Naive thymus-derived CD4-positive, alpha-beta T cell (primary cell): ENCODE measurements at regions of chr10 and their contacts with region 1.

Region 1: GRCh38 chr10:133329491-133330202 is 7.0 kb downstream of the CALY start:
- DNase-seq: peak; percentile 72 to 88 (median 82)
- ATAC-seq: peak; percentile 92
- H3K4me3 ChIP-seq: no peak overlapping the region
- H3K4me3 Mint-ChIP-seq: peak overlapping the region in 8 of 10 donors; percentile 10 to 58 (median 42)
- H3K27ac ChIP-seq: no peak overlapping the region
- H3K27ac Mint-ChIP-seq: no peak overlapping the region
- H3K4me1 ChIP-seq: peaks cover 8 to 18% of the 10 kb centered on the region in 2 donors
- H3K4me1 Mint-ChIP-seq: peaks cover 4 to 18% (median 12%) of the 10 kb centered on the region in 7 donors
- H3K27me3 ChIP-seq: peaks cover 8 to 12% of the 10 kb centered on the region in 2 donors
- H3K27me3 Mint-ChIP-seq: peaks cover 12 to 78% (median 19%) of the 10 kb centered on the region in 5 donors

Region 2: DNA sequence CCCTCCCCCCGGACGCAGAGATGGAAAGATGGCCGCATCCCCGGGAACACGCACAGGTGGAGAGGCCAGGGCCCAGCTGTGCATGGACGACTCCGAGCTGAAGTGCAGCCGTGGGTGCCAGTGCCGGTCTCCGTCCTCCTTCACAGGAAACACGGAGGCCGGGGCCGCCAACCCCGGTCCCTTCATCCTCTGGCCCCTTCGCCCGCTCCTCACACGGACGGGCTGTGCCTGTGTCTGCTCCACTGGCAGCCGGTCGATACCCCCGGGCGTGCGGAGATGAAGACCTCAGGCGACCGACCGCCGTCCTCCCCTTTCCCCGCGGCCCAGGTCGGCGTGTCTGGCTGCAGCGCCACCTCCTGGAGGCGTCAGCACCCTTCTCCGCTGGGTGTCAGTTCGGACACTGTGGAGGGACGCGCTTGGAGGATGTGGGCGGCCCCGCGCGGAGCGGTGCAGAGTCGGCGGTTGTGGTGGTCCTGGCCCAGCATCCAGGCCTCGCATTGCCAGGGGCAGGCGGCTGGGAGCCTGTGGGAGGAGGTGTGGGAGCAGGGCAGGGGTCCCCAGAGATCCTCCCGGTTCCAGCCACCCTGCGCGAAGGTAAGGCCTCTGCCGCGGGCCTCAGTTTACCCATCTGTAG is 11.0 kb before region 1 on chr10:
- CTCF ChIA-PET with region 1: interaction called, 10 read pairs
- POLR2A ChIA-PET with region 1: interaction called, 10 read pairs
- intact Hi-C with region 1: no loop called
- DNase-seq: peak in 8 of 9 donors; percentile 38 to 78 (median 52)
- ATAC-seq: peak; percentile 96
- H3K4me3 ChIP-seq: peak overlapping the region; percentile 41
- H3K4me3 Mint-ChIP-seq: peak overlapping the region; percentile 34 to 77 (median 70)
- H3K27ac ChIP-seq: no peak overlapping the region
- H3K27ac Mint-ChIP-seq: peak overlapping the region in 1 of 9 donors; percentile 49
- H3K4me1 ChIP-seq: no peaks in the 10 kb centered on the region
- H3K4me1 Mint-ChIP-seq: peaks cover 0 to 13% (median 11%) of the 10 kb centered on the region in 7 donors
- H3K27me3 ChIP-seq: no peaks in the 10 kb centered on the region
- H3K27me3 Mint-ChIP-seq: peaks cover 0 to 15% (median 6%) of the 10 kb centered on the region in 5 donors

Region 3: GRCh38 chr10:133378251-133379096 is 48.8 kb after region 1 on chr10:
- CTCF ChIA-PET with region 1: interaction called, 4 read pairs
- POLR2A ChIA-PET with region 1: no interaction called
- intact Hi-C with region 1: loop called in 1 of 2 experiments (anchors 2 kb)
- DNase-seq: peak in 8 of 9 donors; percentile 51 to 78 (median 59)
- ATAC-seq: peak; percentile 73
- H3K4me3 ChIP-seq: peak overlapping the region; percentile 92
- H3K4me3 Mint-ChIP-seq: peak overlapping the region; percentile 82 to 90 (median 86)
- H3K27ac ChIP-seq: peak overlapping the region; percentile 69
- H3K27ac Mint-ChIP-seq: peak overlapping the region in 5 of 9 donors; percentile 33 to 84 (median 75)
- H3K4me1 ChIP-seq: peaks cover 0 to 3% of the 10 kb centered on the region in 2 donors
- H3K4me1 Mint-ChIP-seq: peaks cover 0 to 18% (median 10%) of the 10 kb centered on the region in 7 donors
- H3K27me3 ChIP-seq: no peaks in the 10 kb centered on the region
- H3K27me3 Mint-ChIP-seq: peaks cover 0 to 14% (median 0%) of the 10 kb centered on the region in 5 donors

Region 4: DNA sequence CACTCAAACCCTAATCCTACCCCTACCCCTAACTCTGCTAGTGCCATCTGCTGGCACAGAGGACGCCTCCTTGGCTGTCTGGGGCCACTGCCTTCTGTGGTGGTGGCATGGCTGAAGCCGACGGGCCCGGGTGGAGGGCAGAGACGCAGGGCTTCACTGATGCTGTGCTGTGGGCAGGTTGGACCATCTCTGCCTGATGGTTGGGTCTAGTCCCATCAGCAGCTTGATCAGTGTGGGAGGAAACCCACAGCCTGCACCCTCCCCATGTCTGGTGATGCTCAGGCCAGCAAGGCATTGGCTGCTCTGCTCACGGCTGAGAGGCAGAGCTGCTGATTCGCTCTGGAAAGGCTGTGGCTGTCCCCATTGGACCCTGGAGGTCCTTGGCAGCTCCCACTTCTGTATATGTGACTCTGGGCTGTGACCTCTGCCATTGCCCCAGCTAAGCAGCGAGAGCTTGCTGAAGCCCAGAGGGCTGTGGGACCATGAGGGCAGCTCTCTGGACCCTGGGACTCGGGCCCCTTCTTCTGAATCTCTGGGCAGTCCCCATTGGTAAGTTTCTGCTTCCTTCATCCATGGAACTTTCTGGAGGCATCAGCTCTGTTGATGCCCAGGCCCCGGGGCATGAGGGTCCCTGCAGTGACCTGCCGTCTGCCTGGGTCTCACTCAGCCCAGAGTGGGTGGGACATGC is 124.0 kb after region 1 on chr10 and contains the start of gene SCART1:
- CTCF ChIA-PET with region 1: no interaction called
- POLR2A ChIA-PET with region 1: no interaction called
- intact Hi-C with region 1: loop called in 1 of 2 experiments (anchors 5 kb)
- DNase-seq: no peak
- ATAC-seq: peak; percentile 55
- H3K4me3 ChIP-seq: no peak within 1 kb of the TSS
- H3K4me3 Mint-ChIP-seq: no peak within 1 kb of the TSS
- H3K27ac ChIP-seq: no peak within 1 kb of the TSS
- H3K27ac Mint-ChIP-seq: no peak within 1 kb of the TSS
- H3K4me1 ChIP-seq: no peaks in the 10 kb centered on the region
- H3K4me1 Mint-ChIP-seq: peaks cover 0 to 4% (median 0%) of the 10 kb centered on the region in 7 donors
- H3K27me3 ChIP-seq: no peaks in the 10 kb centered on the region
- H3K27me3 Mint-ChIP-seq: no peaks in the 10 kb centered on the region
- total RNA-seq, gene SCART1: 2.3 to 8.6 (median 4.5) TPM

Region 5: GRCh38 chr10:133608855-133609254 is 279.2 kb after region 1 on chr10:
- CTCF ChIA-PET with region 1: interaction called, 7 read pairs
- POLR2A ChIA-PET with region 1: no interaction called
- intact Hi-C with region 1: loop called (anchors 1 to 5 kb)
- DNase-seq: peak in 5 of 9 donors; percentile 7 to 23 (median 17)
- ATAC-seq: no peak
- H3K4me3 ChIP-seq: no peak overlapping the region
- H3K4me3 Mint-ChIP-seq: no peak overlapping the region
- H3K27ac ChIP-seq: no peak overlapping the region
- H3K27ac Mint-ChIP-seq: no peak overlapping the region
- H3K4me1 ChIP-seq: no peaks in the 10 kb centered on the region
- H3K4me1 Mint-ChIP-seq: peaks cover 0 to 3% (median 0%) of the 10 kb centered on the region in 7 donors
- H3K27me3 ChIP-seq: no peaks in the 10 kb centered on the region
- H3K27me3 Mint-ChIP-seq: peaks cover 42 to 62% (median 56%) of the 10 kb centered on the region in 5 donors